ENCODE measurements at regions of chr6 and their contacts with region 1.

Region 1: GRCh38 chr6:138765896-138766655 is 7.5 kb upstream of the CCDC28A start:
- DNase-seq: no peak
- H3K4me3 ChIP-seq: no peak overlapping the region
- H3K27ac ChIP-seq: no peak overlapping the region
- H3K4me1 ChIP-seq: no peaks in the 10 kb centered on the region
- H3K27me3 ChIP-seq: no peaks in the 10 kb centered on the region
- CTCF ChIP-seq: peak; percentile 45 to 62

Region 2: GRCh38 chr6:138588805-138589434 is 177.2 kb before region 1 on chr6:
- intact Hi-C with region 1: loop called (anchors 5 kb)
- DNase-seq: peak; percentile 60 to 73
- H3K4me3 ChIP-seq: no peak overlapping the region
- H3K27ac ChIP-seq: no peak overlapping the region
- H3K4me1 ChIP-seq: peaks cover 0 to 4% (median 0%) of the 10 kb centered on the region in 4 donors
- H3K27me3 ChIP-seq: no peaks in the 10 kb centered on the region
- CTCF ChIP-seq: peak; percentile 84 to 86

Region 3: GRCh38 chr6:138692058-138692977 is 73.8 kb before region 1 on chr6:
- intact Hi-C with region 1: loop called (anchors 5 kb)
- DNase-seq: peak; percentile 57 to 82
- H3K4me3 ChIP-seq: peak overlapping the region; percentile 63 to 81
- H3K27ac ChIP-seq: peak overlapping the region; percentile 35 to 65
- H3K4me1 ChIP-seq: peaks cover 0 to 15% (median 5%) of the 10 kb centered on the region in 4 donors
- H3K27me3 ChIP-seq: no peaks in the 10 kb centered on the region
- CTCF ChIP-seq: peak; percentile 72 to 89

Measured in tibial artery (tissue), 4 donors.